Left ventricle myocardium superior (tissue), 1 donor: ENCODE measurements at regions of chr6 and their contacts with region 1.

Region 1: DNA sequence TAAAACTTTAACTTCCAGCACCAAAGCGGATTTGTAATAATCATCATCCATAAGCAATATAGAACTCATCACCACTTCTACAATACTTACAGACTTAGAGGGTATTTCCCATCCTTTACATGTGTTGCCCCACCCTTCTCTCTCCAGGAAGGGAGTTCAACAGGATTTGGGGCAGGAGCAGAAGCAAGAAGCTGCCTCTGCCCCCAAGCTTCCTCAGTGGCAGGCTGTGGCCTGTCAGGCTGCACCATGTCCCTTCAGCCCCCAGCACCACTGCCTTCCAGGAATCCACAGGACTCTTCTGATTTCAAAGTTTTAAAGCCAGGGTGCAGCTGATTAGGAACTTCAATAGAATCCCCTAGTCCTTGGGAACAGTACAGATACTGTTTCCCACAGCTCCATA is 36.7 kb upstream of the MCM9 start:
- DNase-seq: no peak
- ATAC-seq: no peak

Region 2: GRCh38 chr6:119105282-119105681 is 133.6 kb after region 1 on chr6:
- intact Hi-C with region 1: loop called (anchors 5 kb)
- DNase-seq: no peak
- ATAC-seq: no peak